ENCODE measurements at regions of chr11 and their contacts with region 1.

Region 1: DNA sequence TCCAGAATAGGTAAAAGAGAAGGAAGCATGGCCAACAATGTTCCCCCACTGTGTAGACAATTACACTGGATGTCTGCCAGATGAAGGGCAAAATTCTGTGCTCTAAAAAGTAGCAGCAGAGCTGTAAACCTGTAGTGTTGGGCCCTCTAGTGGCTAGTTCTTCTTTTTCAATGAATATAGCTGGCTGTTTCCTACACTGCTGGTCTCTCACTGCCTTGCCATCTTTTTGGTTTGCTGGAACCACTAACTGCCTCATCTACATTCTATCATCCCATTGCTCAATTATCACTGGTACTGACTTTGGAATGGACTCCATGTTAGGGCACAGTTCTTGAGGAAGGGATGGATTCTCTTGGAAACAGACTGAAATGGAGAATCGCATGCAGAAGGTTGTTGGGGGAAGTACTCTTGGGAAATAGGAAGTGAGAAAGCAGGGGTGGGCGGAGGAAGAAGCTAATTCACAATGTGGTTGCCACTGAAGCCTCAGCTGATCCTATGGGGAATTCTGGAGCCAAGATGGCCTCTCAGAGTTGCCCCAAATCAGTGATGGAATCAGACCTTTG is 17.9 kb downstream of the KCNE3 start:
- DNase-seq: peak; percentile 96
- H3K4me3 ChIP-seq: no peak overlapping the region
- H3K27ac ChIP-seq: no peak overlapping the region
- H3K4me1 ChIP-seq: peaks cover 18% of the 10 kb centered on the region
- H3K27me3 ChIP-seq: no peaks in the 10 kb centered on the region
- CTCF ChIP-seq: peak; percentile 89

Region 2: GRCh38 chr11:73965076-73965860 is 484.2 kb before region 1 on chr11:
- CTCF ChIA-PET with region 1: interaction called, 3 read pairs
- POLR2A ChIA-PET with region 1: no interaction called
- intact Hi-C with region 1: loop called (anchors 5 kb)
- DNase-seq: no peak
- H3K4me3 ChIP-seq: peak overlapping the region; percentile 9
- H3K27ac ChIP-seq: no peak overlapping the region
- H3K4me1 ChIP-seq: peaks cover 8% of the 10 kb centered on the region
- H3K27me3 ChIP-seq: no peaks in the 10 kb centered on the region
- CTCF ChIP-seq: no peak

Region 3: DNA sequence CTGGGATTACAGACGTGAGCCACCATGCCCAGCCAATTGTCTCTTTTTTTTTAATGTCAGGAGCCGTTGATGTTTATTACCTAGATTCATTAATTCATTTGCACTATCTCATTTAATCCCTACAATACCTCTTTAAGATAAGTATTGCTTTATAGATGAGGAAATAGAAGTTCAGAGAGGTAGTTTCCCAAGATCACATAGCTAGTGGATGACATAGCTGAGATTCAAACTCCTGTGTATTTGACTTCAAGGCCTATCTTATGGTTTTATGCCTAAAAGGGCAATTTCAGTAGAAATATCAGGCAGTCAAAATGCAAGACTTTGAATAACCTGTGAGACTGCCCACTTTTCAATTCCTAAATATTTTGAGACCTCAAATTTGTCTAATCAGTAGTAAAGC is 211.9 kb before region 1 on chr11:
- CTCF ChIA-PET with region 1: no interaction called
- POLR2A ChIA-PET with region 1: no interaction called
- intact Hi-C with region 1: no loop called
- DNase-seq: no peak
- H3K4me3 ChIP-seq: no peak overlapping the region
- H3K27ac ChIP-seq: no peak overlapping the region
- H3K4me1 ChIP-seq: no peaks in the 10 kb centered on the region
- H3K27me3 ChIP-seq: no peaks in the 10 kb centered on the region
- CTCF ChIP-seq: no peak

Region 4: DNA sequence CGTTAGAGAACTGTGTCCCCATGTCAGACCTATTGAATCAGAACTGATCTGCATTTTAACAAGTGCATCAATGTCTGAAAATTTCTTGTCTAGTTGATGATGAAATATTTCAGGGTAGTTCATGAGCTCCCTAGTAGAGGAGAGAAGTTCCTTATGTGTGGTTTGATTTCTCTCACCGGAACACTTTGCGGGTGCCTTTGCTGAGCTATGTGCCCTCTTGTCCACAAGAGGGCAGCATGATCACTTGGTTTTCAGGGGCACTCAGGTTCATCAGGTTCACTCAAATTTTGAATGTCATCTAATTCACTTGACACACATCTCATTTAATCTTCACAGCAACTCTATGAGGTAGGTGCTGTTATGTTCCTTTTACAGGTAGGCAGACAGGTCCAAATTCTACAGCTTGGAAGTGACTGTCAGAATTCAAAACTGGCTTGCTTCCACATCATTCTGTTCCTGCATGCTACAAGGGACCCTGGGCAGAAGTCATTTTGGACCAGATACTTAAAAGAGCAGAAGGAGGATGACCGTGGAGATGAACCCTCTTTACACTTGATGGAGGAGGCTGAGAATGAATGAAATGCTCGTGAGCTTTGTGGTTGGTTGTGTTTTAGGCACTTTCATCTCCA is 193.6 kb before region 1 on chr11:
- CTCF ChIA-PET with region 1: interaction called, 70 read pairs
- POLR2A ChIA-PET with region 1: no interaction called
- intact Hi-C with region 1: loop called (anchors 1 kb)
- DNase-seq: peak; percentile 78
- H3K4me3 ChIP-seq: no peak overlapping the region
- H3K27ac ChIP-seq: no peak overlapping the region
- H3K4me1 ChIP-seq: no peaks in the 10 kb centered on the region
- H3K27me3 ChIP-seq: no peaks in the 10 kb centered on the region
- CTCF ChIP-seq: peak; percentile 98

Region 5: DNA sequence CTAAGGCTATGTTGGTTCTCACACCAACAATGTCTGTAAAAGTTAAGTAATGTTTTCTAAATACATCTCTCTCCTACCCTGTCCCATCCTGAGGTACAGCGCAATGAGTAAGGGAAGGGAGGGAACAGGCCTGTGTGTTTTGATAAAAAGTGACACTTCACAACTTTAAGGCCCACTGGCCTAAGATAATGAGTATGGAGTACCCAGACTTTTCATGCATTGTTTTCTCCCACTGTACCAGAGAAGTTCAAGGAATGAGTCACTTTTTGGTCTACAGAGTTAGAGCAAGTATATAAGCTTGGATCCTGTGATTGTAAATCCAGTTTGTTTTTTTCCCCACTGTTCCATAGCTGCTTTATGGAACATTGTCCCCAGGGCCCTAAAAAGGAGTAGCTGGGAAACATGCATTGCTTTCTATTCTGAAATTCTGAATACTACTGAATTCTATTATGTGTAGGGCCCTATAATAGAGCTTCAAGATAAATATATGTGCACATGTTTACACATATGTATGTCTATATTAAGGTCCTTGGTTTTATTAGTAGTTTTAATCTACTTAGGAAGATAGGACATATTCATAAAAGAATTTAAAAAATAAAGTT is 11.9 kb before region 1 on chr11:
- CTCF ChIA-PET with region 1: interaction called, 10 read pairs
- POLR2A ChIA-PET with region 1: interaction called, 9 read pairs
- intact Hi-C with region 1: no loop called
- DNase-seq: no peak
- H3K4me3 ChIP-seq: no peak overlapping the region
- H3K27ac ChIP-seq: no peak overlapping the region
- H3K4me1 ChIP-seq: peaks cover under 1% of the 10 kb centered on the region
- H3K27me3 ChIP-seq: no peaks in the 10 kb centered on the region
- CTCF ChIP-seq: no peak

Region 6: GRCh38 chr11:74492974-74493790 is 43.7 kb after region 1 on chr11 and contains the start of gene LIPT2:
- CTCF ChIA-PET with region 1: interaction called, 15 read pairs
- POLR2A ChIA-PET with region 1: no interaction called
- intact Hi-C with region 1: no loop called
- DNase-seq: peak; percentile 100
- H3K4me3 ChIP-seq: peak within 1 kb of the TSS; percentile 74
- H3K27ac ChIP-seq: peak within 1 kb of the TSS; percentile 98
- H3K4me1 ChIP-seq: peaks cover 8% of the 10 kb centered on the region
- H3K27me3 ChIP-seq: no peaks in the 10 kb centered on the region
- CTCF ChIP-seq: no peak
- total RNA-seq, gene LIPT2: 8.6 and 12.6 TPM in 2 replicates